ENCODE measurements at regions of chr16 and their contacts with region 1.

Region 1: DNA sequence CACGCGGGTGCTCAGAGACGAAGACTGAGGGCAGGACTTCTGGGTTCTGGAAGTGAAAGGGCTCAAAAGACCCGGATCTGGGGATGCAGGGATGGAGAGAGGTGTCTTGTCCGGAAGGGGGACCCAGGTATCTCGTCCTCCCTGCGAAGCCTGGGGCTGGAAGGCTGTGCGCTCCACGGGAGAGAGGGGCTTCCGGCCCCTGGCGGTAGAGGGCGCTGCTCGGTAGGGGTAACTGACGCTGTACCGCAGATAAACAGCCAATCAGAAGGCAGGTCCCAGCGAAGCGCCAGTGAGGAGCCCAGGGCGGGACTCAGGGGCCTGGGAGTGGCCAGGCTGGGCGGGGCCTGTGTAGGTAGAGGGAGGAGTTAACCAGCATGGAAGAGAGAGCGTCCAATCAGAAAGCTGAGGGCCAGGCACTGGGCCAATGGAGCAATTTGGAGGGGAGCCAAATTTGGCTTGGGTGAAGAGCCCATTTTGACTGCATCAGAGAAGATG is 804 bp downstream of the TGFB1I1 start:
- DNase-seq: peak; percentile 99
- H3K4me3 ChIP-seq: peak overlapping the region; percentile 79 to 95 (median 90)
- H3K27ac ChIP-seq: peak overlapping the region; percentile 98 to 99 (median 98)
- H3K4me1 ChIP-seq: peaks cover 0 to 62% (median 59%) of the 10 kb centered on the region in 4 donors
- H3K27me3 ChIP-seq: no peaks in the 10 kb centered on the region
- CTCF ChIP-seq: peak; percentile 79 to 92 (median 86)
- EP300 ChIP-seq: no peak
- POLR2A ChIP-seq: peak in 1 of 2 donors; percentile 55

Region 2: GRCh38 chr16:31507929-31508705 is 35.4 kb after region 1 on chr16 and contains the start of gene RUSF1:
- intact Hi-C with region 1: loop called (anchors 2 kb)
- DNase-seq: peak; percentile 95
- H3K4me3 ChIP-seq: peak within 1 kb of the TSS; percentile 75 to 97 (median 92)
- H3K27ac ChIP-seq: peak within 1 kb of the TSS; percentile 92 to 97 (median 94)
- H3K4me1 ChIP-seq: peaks cover 0 to 42% (median 31%) of the 10 kb centered on the region in 4 donors
- H3K27me3 ChIP-seq: no peaks in the 10 kb centered on the region
- CTCF ChIP-seq: no peak
- EP300 ChIP-seq: peak in 1 of 4 donors; percentile 61
- POLR2A ChIP-seq: peak; percentile 91
- total RNA-seq, gene RUSF1: 31.6 to 67.0 (median 37.2) TPM

Region 3: DNA sequence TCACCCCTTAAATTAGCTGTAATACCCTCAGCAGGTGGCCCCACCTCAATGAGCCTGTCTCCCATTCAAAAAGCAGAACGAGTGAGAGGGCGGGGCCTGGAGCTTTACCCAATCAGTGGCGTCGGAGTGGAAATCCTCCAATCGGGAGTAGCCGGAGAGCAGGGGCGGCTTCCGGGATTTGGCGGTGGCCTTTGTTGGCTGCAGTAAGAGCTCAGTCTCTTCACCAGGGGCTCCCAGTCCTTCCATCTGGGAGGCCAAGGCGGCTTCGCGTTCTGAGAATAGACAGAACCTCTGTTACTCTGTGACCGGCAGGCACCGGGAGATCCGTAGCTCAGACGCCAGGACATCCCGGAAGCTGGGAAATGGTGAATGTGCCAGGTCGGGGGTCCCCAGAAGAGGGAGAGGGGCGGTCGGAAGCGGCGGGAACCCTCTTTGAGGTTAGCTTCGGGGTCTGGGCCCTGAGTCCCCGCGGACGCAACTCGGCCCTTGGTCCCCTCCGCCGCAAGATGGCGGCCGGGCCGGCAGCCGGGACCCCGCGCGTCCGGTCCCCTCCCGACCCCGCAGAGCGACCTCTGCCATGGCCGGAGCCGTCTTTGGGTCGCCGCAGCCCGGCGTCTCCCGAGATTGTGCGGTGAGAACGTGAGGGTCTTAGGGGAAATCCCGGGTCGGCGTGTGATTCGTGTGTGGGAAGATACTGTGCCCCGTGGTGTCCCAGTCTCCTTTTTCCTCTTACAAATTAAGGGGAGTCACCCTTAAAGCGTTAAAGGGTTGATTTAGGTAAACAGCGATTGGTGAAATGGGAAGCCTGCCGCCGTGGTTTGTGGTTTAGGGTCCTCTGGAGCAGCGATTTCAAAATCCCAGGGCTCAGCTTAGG is 240.6 kb after region 1 on chr16:
- intact Hi-C with region 1: loop called (anchors 10 kb)
- DNase-seq: peak; percentile 97
- H3K4me3 ChIP-seq: peak overlapping the region; percentile 88 to 96 (median 91)
- H3K27ac ChIP-seq: peak overlapping the region; percentile 94 to 96 (median 96)
- H3K4me1 ChIP-seq: peaks cover 0 to 27% (median 20%) of the 10 kb centered on the region in 4 donors
- H3K27me3 ChIP-seq: no peaks in the 10 kb centered on the region
- CTCF ChIP-seq: no peak
- EP300 ChIP-seq: no peak
- POLR2A ChIP-seq: peak; percentile 73 to 84

Measured in sigmoid colon (tissue), 7 donors.